ENCODE measurements at regions of chr1 and their contacts with region 1.

Region 1: GRCh38 chr1:234963180-234963903 is 165.3 kb downstream of the TOMM20 start:
- DNase-seq: peak; percentile 85 to 96
- ATAC-seq: peak; percentile 84 to 95 (median 93)
- H3K4me3 ChIP-seq: no peak overlapping the region
- H3K4me3 Mint-ChIP-seq: peak overlapping the region; percentile 74
- H3K27ac ChIP-seq: peak overlapping the region; percentile 93
- H3K27ac Mint-ChIP-seq: peak overlapping the region; percentile 92 to 98
- H3K4me1 ChIP-seq: peaks cover 59% of the 10 kb centered on the region
- H3K4me1 Mint-ChIP-seq: peaks cover 41 to 59% of the 10 kb centered on the region in 2 donors
- H3K27me3 ChIP-seq: no peaks in the 10 kb centered on the region
- H3K27me3 Mint-ChIP-seq: no peaks in the 10 kb centered on the region
- CTCF ChIP-seq: no peak

Region 2: DNA sequence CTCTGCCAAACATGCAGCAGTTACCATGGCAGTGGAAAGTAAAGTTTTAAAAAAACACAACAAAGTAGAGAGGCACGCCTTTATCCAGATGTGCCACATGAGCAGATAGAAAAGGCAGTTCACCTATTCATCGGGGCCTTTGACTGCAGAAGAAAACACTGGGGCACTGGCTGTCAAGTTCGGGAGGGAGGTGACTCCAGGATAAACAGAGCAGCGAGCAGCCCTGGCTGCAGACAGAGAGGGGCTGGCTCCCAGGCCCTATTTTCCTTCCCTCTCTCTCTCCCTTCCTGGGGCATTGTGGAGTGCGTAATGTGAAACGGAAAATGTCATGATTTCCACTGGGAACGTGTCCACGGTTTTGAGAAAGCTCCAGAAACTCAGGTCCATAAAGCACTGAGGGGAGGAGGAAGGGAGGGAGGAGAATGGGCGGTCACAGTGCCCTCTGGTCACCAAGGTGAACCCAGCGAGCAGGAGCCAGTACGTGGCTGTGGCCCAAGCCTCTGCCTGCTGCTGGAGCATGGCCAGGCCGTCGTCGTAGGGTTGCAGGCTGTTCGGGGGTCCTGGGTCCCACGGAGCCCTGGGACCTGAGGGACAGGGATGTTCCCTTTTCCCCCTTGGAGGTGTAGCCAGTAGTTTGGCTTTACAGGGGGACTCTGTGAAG is 238.7 kb before region 1 on chr1:
- intact Hi-C with region 1: loop called (anchors 1 kb)
- DNase-seq: peak in 1 of 2 donors; percentile 60
- ATAC-seq: peak in 2 of 3 donors; percentile 27 to 30
- H3K4me3 ChIP-seq: peak overlapping the region; percentile 18
- H3K4me3 Mint-ChIP-seq: peak overlapping the region; percentile 87
- H3K27ac ChIP-seq: peak overlapping the region; percentile 90
- H3K27ac Mint-ChIP-seq: peak overlapping the region; percentile 91
- H3K4me1 ChIP-seq: peaks cover 52% of the 10 kb centered on the region
- H3K4me1 Mint-ChIP-seq: peaks cover 24 to 39% of the 10 kb centered on the region in 2 donors
- H3K27me3 ChIP-seq: no peaks in the 10 kb centered on the region
- H3K27me3 Mint-ChIP-seq: no peaks in the 10 kb centered on the region
- CTCF ChIP-seq: no peak

Region 3: DNA sequence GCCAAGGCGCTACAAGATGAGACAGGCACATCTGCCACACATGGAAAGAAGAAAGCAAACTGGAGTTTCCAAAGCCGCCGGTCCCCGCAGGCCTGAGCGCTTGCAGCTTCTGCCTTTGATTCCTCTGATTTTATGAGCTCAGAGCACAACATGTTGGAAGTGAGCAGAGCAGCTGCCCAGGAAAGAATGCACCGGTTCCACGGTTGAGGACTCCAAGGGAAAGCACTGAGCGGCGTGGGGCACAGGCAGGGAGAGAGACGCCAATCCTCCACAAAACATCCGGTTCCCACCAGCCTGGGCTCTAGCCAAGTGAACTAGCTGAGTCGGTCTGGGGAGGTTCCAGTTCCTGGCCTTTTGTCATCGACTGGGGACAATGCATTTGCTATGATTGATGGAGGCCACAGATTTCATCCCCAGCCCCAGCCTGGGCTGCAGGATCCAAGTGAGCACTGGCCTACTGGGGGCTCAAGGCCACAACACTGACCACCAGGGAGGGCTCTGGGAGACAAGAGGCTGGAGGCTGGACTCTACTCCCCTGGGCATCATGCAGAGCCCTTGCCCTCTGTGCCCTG is 100.3 kb before region 1 on chr1:
- intact Hi-C with region 1: loop called (anchors 1 kb)
- DNase-seq: no peak
- ATAC-seq: no peak
- H3K4me3 ChIP-seq: no peak overlapping the region
- H3K4me3 Mint-ChIP-seq: no peak overlapping the region
- H3K27ac ChIP-seq: no peak overlapping the region
- H3K27ac Mint-ChIP-seq: peak overlapping the region in 1 of 2 donors; percentile 24
- H3K4me1 ChIP-seq: peaks cover 24% of the 10 kb centered on the region
- H3K4me1 Mint-ChIP-seq: peaks cover 19 to 23% of the 10 kb centered on the region in 2 donors
- H3K27me3 ChIP-seq: no peaks in the 10 kb centered on the region
- H3K27me3 Mint-ChIP-seq: peaks cover 5 to 10% of the 10 kb centered on the region in 2 donors
- CTCF ChIP-seq: no peak

Region 4: DNA sequence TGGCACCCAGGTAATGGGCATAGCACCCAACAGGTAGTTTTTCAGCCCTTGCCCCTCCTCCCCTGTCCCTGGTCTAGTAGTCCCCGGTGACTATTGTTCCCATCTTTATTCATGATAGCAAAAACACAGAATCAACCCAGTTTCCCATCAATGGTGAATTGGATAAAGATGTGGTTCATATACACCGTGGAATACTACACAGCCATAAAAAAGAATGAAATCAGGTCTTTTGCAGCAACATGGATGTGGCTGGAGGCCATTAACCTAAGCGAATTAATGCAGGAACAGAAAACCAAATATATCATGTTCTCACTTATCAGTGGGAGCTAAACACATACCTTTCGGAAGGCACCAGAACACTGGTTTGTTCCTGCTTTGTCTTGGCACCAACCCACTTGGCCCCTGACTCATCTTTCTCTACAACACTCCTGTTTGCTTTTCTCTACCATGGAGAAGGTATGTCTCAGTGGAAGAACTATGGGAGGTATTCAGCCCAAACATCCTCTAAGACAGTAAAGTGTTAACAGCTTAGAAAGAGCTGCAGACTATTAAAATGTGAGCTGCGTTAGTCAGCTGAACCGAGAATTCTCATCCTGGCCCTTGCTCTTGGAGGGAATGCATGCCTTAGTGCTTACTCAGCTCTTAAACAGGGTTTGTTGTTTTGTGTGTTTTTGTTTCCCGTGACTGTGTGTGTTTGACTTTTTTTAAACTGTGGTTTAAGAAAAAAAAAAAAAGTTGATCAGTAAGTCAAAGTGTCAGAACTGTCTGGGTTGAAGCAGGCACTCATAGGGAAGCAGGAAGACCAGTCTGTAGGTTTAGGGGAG is 37.7 kb before region 1 on chr1:
- intact Hi-C with region 1: loop called (anchors 1 kb)
- DNase-seq: peak in 1 of 2 donors; percentile 64
- ATAC-seq: peak; percentile 28 to 50 (median 46)
- H3K4me3 ChIP-seq: no peak overlapping the region
- H3K4me3 Mint-ChIP-seq: peak overlapping the region; percentile 84
- H3K27ac ChIP-seq: peak overlapping the region; percentile 68
- H3K27ac Mint-ChIP-seq: peak overlapping the region; percentile 86 to 92
- H3K4me1 ChIP-seq: peaks cover 37% of the 10 kb centered on the region
- H3K4me1 Mint-ChIP-seq: peaks cover 34 to 35% of the 10 kb centered on the region in 2 donors
- H3K27me3 ChIP-seq: no peaks in the 10 kb centered on the region
- H3K27me3 Mint-ChIP-seq: peaks cover 0 to 5% of the 10 kb centered on the region in 2 donors
- CTCF ChIP-seq: no peak

Region 5: DNA sequence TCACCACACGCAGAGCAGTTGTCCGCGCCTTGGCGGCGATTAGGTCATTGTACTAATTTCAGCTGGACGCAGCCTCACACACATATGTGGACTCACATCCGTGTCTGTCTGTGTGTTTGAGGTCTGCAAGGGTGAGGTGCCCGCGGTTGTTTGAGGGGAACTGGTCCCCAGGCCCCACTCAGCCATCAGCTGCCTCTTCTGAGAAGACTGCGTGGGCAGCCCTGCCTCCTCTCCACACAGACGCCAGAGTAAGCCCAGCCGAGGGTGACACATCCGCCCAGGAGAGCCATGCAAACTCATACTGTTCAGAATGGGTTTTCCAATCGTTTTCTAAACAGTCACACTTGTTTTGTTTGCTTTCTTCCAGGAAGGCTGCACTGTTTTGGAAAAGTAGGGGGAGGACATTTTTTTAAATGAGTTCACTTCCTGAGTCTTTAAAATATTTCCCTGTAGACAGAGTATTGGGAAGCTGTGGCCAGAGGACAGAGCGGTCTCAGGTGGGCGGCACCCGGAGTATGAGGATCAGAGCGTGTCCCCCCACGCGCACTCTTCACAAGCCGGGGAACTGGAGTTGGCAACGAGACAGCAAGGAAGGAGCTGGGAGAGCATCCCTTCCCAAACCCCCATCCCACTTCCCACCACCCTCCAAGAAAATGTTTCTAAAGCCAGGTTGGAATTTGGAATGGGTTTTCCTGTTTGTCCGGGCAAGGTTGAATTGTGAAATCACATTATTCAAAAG is 112.0 kb after region 1 on chr1:
- intact Hi-C with region 1: loop called (anchors 1 kb)
- DNase-seq: peak; percentile 53 to 58
- ATAC-seq: peak; percentile 80 to 92 (median 82)
- H3K4me3 ChIP-seq: no peak overlapping the region
- H3K4me3 Mint-ChIP-seq: peak overlapping the region; percentile 26
- H3K27ac ChIP-seq: no peak overlapping the region
- H3K27ac Mint-ChIP-seq: peak overlapping the region; percentile 57 to 65
- H3K4me1 ChIP-seq: peaks cover 37% of the 10 kb centered on the region
- H3K4me1 Mint-ChIP-seq: peaks cover 11 to 20% of the 10 kb centered on the region in 2 donors
- H3K27me3 ChIP-seq: no peaks in the 10 kb centered on the region
- H3K27me3 Mint-ChIP-seq: no peaks in the 10 kb centered on the region
- CTCF ChIP-seq: no peak